ENCODE measurements at regions of chr3 and their contacts with region 1.

Region 1: DNA sequence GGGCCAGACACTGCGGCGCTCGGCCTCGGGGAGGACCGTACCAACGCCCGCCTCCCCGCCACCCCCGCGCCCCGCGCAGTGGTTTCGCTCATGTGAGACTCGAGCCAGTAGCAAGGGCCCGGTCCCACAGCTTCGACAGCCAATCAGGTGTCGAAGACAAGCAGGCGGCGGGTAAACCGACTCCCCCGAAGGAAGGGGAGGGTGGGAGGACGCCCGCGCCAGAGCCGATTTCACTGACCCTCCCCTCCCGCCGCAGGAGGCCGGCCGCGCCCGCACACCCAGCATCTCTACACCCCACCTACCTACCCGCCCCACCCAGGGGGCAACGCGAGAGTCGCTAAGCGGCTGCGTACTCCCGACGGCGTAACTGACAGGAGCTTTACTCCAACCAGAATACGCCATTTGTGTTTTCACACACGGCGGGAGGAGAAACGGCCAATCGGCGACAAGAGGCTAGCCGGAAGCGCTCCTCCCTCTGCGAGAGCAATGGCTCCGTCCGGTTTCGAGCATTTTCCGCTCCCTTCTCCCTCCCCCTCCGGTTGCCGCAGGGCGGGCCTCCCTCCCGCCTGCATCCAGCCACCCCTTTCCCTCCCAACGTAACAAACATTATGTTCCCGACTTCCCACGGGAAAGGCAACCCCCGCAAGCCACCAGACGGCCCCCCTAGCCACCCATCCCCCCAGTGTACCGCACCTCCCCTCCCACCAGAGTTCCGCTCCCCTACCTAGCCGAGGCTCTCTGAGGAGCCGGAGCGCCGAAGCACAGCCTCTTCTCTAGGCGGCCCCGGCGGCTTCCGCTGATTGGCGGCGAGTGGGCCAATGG is 504 bp upstream of the SETD5 start:
- DNase-seq: peak; percentile 98 to 100 (median 99)
- ATAC-seq: peak; percentile 65
- H3K4me3 ChIP-seq: peak overlapping the region; percentile 74
- H3K4me3 Mint-ChIP-seq: peak overlapping the region; percentile 95
- H3K27ac ChIP-seq: peak overlapping the region; percentile 87 to 95
- H3K27ac Mint-ChIP-seq: peak overlapping the region; percentile 99
- H3K4me1 ChIP-seq: peaks cover 30% of the 10 kb centered on the region
- H3K4me1 Mint-ChIP-seq: peaks cover 78% of the 10 kb centered on the region
- H3K27me3 ChIP-seq: no peaks in the 10 kb centered on the region
- H3K27me3 Mint-ChIP-seq: no peaks in the 10 kb centered on the region
- CTCF ChIP-seq: no peak

Region 2: GRCh38 chr3:9352917-9353752 is 43.8 kb before region 1 on chr3:
- CTCF ChIA-PET with region 1: interaction called, 26 read pairs
- POLR2A ChIA-PET with region 1: interaction called, 5 read pairs
- intact Hi-C with region 1: no loop called
- DNase-seq: peak; percentile 21 to 80 (median 52)
- ATAC-seq: peak; percentile 77
- H3K4me3 ChIP-seq: no peak overlapping the region
- H3K4me3 Mint-ChIP-seq: no peak overlapping the region
- H3K27ac ChIP-seq: no peak overlapping the region
- H3K27ac Mint-ChIP-seq: no peak overlapping the region
- H3K4me1 ChIP-seq: peaks cover 13% of the 10 kb centered on the region
- H3K4me1 Mint-ChIP-seq: peaks cover 4% of the 10 kb centered on the region
- H3K27me3 ChIP-seq: no peaks in the 10 kb centered on the region
- H3K27me3 Mint-ChIP-seq: no peaks in the 10 kb centered on the region
- CTCF ChIP-seq: peak; percentile 92

Region 3: DNA sequence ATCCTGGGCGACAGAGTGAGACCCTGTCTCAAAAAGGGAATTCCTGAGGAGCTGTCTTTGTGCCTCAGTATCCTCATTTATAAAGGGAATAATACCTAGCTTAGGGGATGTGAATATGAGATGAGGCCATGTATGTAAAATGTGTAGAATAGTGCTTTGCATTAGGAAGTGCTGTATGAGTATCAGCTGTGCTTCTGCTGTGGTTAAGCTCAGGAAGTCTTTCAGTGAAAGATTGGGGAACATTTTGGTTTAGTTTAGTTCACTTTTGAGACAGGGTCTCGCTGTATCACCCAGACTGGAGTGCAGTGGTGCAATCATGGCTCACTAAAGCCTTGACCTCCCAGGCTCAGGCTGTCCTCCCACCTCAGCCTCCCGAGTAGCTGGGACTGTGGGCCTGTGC is 23.4 kb before region 1 on chr3:
- CTCF ChIA-PET with region 1: interaction called, 3 read pairs
- POLR2A ChIA-PET with region 1: interaction called, 23 read pairs
- intact Hi-C with region 1: no loop called
- DNase-seq: no peak
- ATAC-seq: no peak
- H3K4me3 ChIP-seq: no peak overlapping the region
- H3K4me3 Mint-ChIP-seq: no peak overlapping the region
- H3K27ac ChIP-seq: no peak overlapping the region
- H3K27ac Mint-ChIP-seq: peak overlapping the region; percentile 39
- H3K4me1 ChIP-seq: peaks cover 10% of the 10 kb centered on the region
- H3K4me1 Mint-ChIP-seq: peaks cover 71% of the 10 kb centered on the region
- H3K27me3 ChIP-seq: no peaks in the 10 kb centered on the region
- H3K27me3 Mint-ChIP-seq: no peaks in the 10 kb centered on the region
- CTCF ChIP-seq: no peak

Region 4: GRCh38 chr3:9409981-9410854 is 13.3 kb after region 1 on chr3:
- CTCF ChIA-PET with region 1: interaction called, 10 read pairs
- POLR2A ChIA-PET with region 1: interaction called, 19 read pairs
- intact Hi-C with region 1: loop called in 1 of 2 experiments (anchors 2 kb)
- DNase-seq: no peak
- ATAC-seq: no peak
- H3K4me3 ChIP-seq: no peak overlapping the region
- H3K4me3 Mint-ChIP-seq: no peak overlapping the region
- H3K27ac ChIP-seq: no peak overlapping the region
- H3K27ac Mint-ChIP-seq: peak overlapping the region; percentile 63
- H3K4me1 ChIP-seq: peaks cover 22% of the 10 kb centered on the region
- H3K4me1 Mint-ChIP-seq: peaks cover 81% of the 10 kb centered on the region
- H3K27me3 ChIP-seq: no peaks in the 10 kb centered on the region
- H3K27me3 Mint-ChIP-seq: no peaks in the 10 kb centered on the region
- CTCF ChIP-seq: no peak

Region 5: GRCh38 chr3:9422712-9423424 is 26.0 kb after region 1 on chr3:
- CTCF ChIA-PET with region 1: interaction called, 3 read pairs
- POLR2A ChIA-PET with region 1: interaction called, 36 read pairs
- intact Hi-C with region 1: loop called (anchors 1 to 2 kb)
- DNase-seq: peak in 3 of 14 experiments; percentile 55 to 70 (median 64)
- ATAC-seq: peak; percentile 96
- H3K4me3 ChIP-seq: no peak overlapping the region
- H3K4me3 Mint-ChIP-seq: no peak overlapping the region
- H3K27ac ChIP-seq: peak overlapping the region; percentile 3 to 5
- H3K27ac Mint-ChIP-seq: peak overlapping the region; percentile 77
- H3K4me1 ChIP-seq: peaks cover 7% of the 10 kb centered on the region
- H3K4me1 Mint-ChIP-seq: peaks cover 60% of the 10 kb centered on the region
- H3K27me3 ChIP-seq: no peaks in the 10 kb centered on the region
- H3K27me3 Mint-ChIP-seq: no peaks in the 10 kb centered on the region
- CTCF ChIP-seq: peak; percentile 65

Region 6: GRCh38 chr3:9731206-9732079 is 334.5 kb after region 1 on chr3 and contains the start of gene BRPF1:
- CTCF ChIA-PET with region 1: no interaction called
- POLR2A ChIA-PET with region 1: interaction called, 9 read pairs
- intact Hi-C with region 1: loop called in 1 of 2 experiments (anchors 2 kb)
- DNase-seq: peak; percentile 98 to 100 (median 100)
- ATAC-seq: peak; percentile 91
- H3K4me3 ChIP-seq: peak within 1 kb of the TSS; percentile 86
- H3K4me3 Mint-ChIP-seq: peak within 1 kb of the TSS; percentile 88
- H3K27ac ChIP-seq: peak within 1 kb of the TSS; percentile 84 to 96
- H3K27ac Mint-ChIP-seq: peak within 1 kb of the TSS; percentile 91
- H3K4me1 ChIP-seq: peaks cover 45% of the 10 kb centered on the region
- H3K4me1 Mint-ChIP-seq: peaks cover 79% of the 10 kb centered on the region
- H3K27me3 ChIP-seq: no peaks in the 10 kb centered on the region
- H3K27me3 Mint-ChIP-seq: no peaks in the 10 kb centered on the region
- CTCF ChIP-seq: no peak
- total RNA-seq, gene BRPF1: 23.7 to 25.6 TPM

Measured in CD4-positive, alpha-beta T cell (primary cell).